IMR-90 (cell line): ENCODE measurements at regions of chr10 and their contacts with region 1.

Region 1: DNA sequence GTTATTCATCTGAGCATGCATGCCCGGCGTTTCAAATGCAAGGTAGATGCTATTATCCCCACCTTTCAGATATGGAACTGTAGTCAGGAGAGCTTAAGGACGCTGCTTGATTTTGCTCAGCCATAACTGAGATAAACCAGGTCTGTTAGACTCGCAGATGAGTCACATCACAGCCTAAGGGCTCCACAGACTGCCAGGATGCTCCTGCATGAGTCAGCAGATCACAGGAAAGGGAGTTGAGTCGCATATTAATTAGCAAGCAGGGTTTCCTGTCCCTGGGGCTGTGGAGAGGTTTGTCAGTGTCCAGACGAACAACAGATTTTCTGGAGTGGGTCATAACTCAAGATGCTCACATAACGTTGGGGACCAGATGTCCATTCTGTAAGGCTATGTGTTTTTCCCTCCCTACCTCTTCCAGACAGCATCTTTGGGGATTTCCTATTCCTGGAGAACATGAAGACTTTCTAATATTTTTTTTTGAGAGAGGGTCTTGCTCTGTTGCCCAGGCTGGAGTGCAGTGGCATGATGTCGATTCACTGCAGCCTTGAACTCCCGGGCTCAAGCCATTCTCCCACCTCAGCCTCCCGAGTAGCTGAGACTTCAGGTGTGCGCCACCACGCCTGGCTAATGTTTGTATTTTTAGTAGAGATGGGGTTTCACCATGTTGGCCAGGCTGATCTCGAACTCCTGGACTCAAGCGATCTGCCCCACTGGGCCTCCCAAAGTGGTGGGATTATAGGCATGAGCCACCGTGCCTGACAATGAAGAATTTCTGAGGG is 36.7 kb downstream of the PFKFB3 start:
- DNase-seq: peak; percentile 99
- ATAC-seq: peak; percentile 86
- H3K4me3 ChIP-seq: no peak overlapping the region
- H3K27ac ChIP-seq: peak overlapping the region; percentile 50
- H3K4me1 ChIP-seq: peaks cover 13% of the 10 kb centered on the region
- H3K27me3 ChIP-seq: no peaks in the 10 kb centered on the region
- CTCF ChIP-seq: no peak
- POLR2A ChIP-seq: no peak
- RAD21 ChIP-seq: peak; percentile 26

Region 2: DNA sequence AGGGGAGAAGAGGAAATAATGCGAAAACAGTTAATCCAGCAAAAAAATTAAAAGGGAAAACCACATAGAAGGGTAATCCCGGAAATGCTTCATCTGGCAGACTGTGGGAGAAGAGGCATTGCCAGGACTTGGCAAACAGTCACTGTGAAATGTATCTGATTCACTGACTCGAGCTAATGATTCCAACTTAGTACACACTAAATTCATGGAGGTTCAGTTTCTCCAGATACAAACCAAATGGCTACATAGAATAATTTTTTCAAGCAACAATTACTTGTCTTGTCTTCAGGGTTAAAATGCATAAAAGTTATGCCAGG is 462.6 kb before region 1 on chr10:
- CTCF ChIA-PET with region 1: no interaction called
- POLR2A ChIA-PET with region 1: no interaction called
- dilution Hi-C with region 1: no loop called
- in situ Hi-C with region 1: no loop called
- intact Hi-C with region 1: no loop called
- DNase-seq: peak; percentile 71
- ATAC-seq: peak; percentile 50
- H3K4me3 ChIP-seq: no peak overlapping the region
- H3K27ac ChIP-seq: peak overlapping the region; percentile 15; the same call in 1 of the 2 replicates
- H3K4me1 ChIP-seq: peaks cover 13% of the 10 kb centered on the region
- H3K27me3 ChIP-seq: no peaks in the 10 kb centered on the region
- CTCF ChIP-seq: no peak
- POLR2A ChIP-seq: no peak
- RAD21 ChIP-seq: no peak

Region 3: DNA sequence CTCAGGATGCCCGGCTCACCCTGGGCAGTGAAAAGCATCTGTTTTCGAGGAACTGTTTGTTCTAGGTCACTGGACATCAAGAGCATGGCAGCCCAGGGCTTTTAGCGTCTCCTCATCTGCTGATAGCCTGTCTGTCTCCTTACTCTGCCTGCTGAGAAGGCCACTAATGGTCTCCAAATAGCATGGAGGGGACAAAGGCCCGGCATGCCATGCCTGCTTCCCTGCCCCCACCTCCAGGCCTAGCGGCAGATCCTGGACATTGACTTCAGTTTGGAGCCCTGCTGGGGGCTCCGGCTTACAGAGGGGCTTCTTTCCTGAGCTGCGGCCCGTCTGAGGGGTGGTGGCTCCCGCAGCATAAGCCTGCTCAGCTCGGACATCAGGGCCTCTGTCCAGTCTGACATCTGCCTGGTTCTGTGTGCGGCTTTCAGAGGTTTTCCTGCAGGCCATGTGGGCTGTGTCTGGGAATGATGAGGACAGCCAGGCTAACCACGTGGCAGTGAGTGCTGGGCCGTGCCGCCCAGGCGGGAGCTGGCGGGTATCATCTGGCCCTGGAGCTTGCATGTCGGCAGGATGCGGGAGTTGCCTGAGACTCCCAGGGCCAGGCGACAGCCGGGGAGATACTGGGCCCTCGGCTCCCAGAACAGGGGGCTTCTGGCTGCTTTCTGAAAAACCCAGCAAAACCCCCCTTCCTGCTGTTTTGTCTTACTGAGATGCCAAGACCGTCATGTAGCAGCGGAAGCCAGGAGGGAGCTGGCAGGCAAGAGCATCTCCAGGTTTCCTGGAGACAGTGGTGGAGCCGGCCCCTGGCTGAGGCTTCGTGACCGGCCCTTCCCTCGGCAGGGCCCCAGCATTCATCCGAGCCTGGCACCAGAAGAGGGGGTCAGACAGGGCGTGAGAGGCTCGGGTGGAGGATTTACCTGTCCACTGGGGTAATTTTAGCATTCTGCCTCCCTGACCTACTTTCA is 27.4 kb before region 1 on chr10:
- CTCF ChIA-PET with region 1: no interaction called
- POLR2A ChIA-PET with region 1: interaction called, 10 read pairs
- dilution Hi-C with region 1: no loop called
- in situ Hi-C with region 1: no loop called
- intact Hi-C with region 1: loop called (anchors 2 kb)
- DNase-seq: peak; percentile 46
- ATAC-seq: no peak
- H3K4me3 ChIP-seq: no peak overlapping the region
- H3K27ac ChIP-seq: no peak overlapping the region; the same call in 1 of the 2 replicates
- H3K4me1 ChIP-seq: peaks cover 18% of the 10 kb centered on the region; the same call in 1 of the 2 replicates
- H3K27me3 ChIP-seq: no peaks in the 10 kb centered on the region
- CTCF ChIP-seq: no peak
- POLR2A ChIP-seq: no peak
- RAD21 ChIP-seq: no peak